CD8-positive, alpha-beta T cell (primary cell): ENCODE measurements at regions of chr19 and their contacts with region 1.

Region 1: GRCh38 chr19:33118643-33119042 is 13.3 kb upstream of the WDR88 start:
- DNase-seq: no peak
- ATAC-seq: no peak
- H3K4me3 ChIP-seq: no peak overlapping the region
- H3K4me3 Mint-ChIP-seq: no peak overlapping the region
- H3K27ac ChIP-seq: no peak overlapping the region
- H3K27ac Mint-ChIP-seq: no peak overlapping the region
- H3K4me1 ChIP-seq: no peaks in the 10 kb centered on the region
- H3K4me1 Mint-ChIP-seq: no peaks in the 10 kb centered on the region
- H3K27me3 ChIP-seq: no peaks in the 10 kb centered on the region
- H3K27me3 Mint-ChIP-seq: no peaks in the 10 kb centered on the region
- CTCF ChIP-seq: no peak

Region 2: GRCh38 chr19:32599736-32600157 is 518.9 kb before region 1 on chr19:
- CTCF ChIA-PET with region 1: interaction called, 3 read pairs
- POLR2A ChIA-PET with region 1: no interaction called
- intact Hi-C with region 1: loop called (anchors 2 kb)
- DNase-seq: peak in 8 of 9 experiments; percentile 22 to 79 (median 54)
- ATAC-seq: peak; percentile 73
- H3K4me3 ChIP-seq: no peak overlapping the region
- H3K4me3 Mint-ChIP-seq: no peak overlapping the region
- H3K27ac ChIP-seq: no peak overlapping the region
- H3K27ac Mint-ChIP-seq: no peak overlapping the region
- H3K4me1 ChIP-seq: no peaks in the 10 kb centered on the region
- H3K4me1 Mint-ChIP-seq: peaks cover 6% of the 10 kb centered on the region
- H3K27me3 ChIP-seq: no peaks in the 10 kb centered on the region
- H3K27me3 Mint-ChIP-seq: no peaks in the 10 kb centered on the region
- CTCF ChIP-seq: peak; percentile 86

Region 3: GRCh38 chr19:33698664-33699435 is 580.2 kb after region 1 on chr19:
- CTCF ChIA-PET with region 1: no interaction called
- POLR2A ChIA-PET with region 1: no interaction called
- intact Hi-C with region 1: no loop called
- DNase-seq: no peak
- ATAC-seq: no peak
- H3K4me3 ChIP-seq: no peak overlapping the region
- H3K4me3 Mint-ChIP-seq: no peak overlapping the region
- H3K27ac ChIP-seq: no peak overlapping the region
- H3K27ac Mint-ChIP-seq: no peak overlapping the region
- H3K4me1 ChIP-seq: no peaks in the 10 kb centered on the region
- H3K4me1 Mint-ChIP-seq: no peaks in the 10 kb centered on the region
- H3K27me3 ChIP-seq: no peaks in the 10 kb centered on the region
- H3K27me3 Mint-ChIP-seq: peaks cover 5% of the 10 kb centered on the region
- CTCF ChIP-seq: no peak